Activated naive CD4-positive, alpha-beta T cell treated with anti-CD3 and anti-CD28 coated beads, Interleukin-2, amount 10 ng/mL, durations not matched to agents 7 days and 5 days (primary cell): ENCODE measurements at regions of chr2 and their contacts with region 1.

Region 1: DNA sequence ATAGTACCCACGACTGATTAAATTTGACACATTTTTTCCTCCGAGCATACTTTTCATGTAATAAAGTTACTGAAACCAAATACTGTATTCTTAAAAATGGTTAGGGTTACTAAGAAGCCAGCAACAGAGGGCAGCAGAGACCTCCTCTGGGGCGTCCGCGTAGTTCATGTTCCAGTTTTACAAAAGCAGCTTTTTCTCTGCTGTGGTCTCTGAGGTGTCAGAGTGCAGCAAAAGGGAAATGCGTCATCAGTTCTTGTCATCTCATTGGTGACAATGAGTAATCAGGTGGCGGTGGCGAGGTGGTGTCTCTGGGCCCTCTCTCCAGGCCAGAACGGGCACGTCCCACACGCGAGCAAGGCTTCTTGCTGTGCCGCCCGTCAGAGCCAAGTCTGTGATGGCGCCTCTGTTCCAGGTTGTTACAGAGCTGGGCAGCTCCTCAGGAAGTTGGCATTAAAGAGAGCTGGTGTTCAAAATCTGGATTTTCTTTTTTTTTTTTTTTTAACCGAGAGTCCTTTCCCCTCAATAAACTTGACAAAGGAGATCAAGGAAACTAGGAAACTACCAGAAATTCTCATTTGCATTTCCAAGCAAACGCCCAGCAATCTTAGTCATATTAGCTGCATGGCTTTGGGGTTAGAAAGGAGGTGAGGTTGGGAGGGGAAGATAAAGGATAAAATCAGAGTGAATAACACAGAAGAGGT is 98.6 kb upstream of the BZW1 start:
- DNase-seq: peak; percentile 96
- H3K4me3 Mint-ChIP-seq: peak overlapping the region; percentile 68
- H3K27ac Mint-ChIP-seq: peak overlapping the region; percentile 99
- H3K4me1 Mint-ChIP-seq: peaks cover 23% of the 10 kb centered on the region
- H3K27me3 Mint-ChIP-seq: peaks cover 7% of the 10 kb centered on the region

Region 2: DNA sequence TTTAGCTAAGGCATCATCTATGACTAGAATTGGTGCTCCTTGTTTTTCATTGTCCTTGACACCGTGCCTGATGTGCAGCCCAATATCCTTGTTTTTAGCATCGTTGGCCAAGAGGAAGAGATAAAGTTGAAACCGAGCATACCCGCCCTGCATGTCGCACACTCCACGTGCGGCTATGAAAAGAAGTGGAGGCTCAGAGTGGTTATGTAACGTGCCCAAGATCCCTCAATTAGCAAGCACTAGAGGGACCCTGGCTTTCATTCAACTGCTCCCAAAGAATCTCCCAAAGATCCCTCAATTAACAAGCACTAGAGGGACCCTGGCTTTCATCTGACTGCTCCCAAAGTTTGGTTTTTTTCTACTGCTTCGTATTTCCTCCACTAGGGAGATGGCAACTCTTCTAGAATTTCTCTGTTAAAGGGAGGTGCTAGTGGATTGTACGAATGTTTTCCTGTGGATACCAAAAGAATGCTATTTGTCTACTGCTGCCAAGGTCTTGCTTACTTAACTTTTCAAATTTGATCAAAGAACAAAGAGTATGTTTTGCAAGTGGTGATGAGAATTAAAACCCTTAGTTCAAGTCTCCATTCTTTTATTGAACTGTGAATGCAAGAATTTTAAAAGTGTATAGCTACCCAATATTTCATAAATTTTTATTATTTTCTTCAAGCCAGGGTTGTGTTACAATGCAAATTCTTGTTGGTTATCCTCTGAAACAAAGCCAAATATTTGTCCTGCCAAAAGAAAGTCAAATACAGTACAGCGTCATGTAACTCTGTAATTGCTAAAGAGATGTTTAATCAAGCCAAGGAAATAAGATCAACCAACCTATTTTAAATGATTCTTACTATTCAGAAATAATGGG is 35.2 kb before region 1 on chr2:
- CTCF ChIA-PET with region 1: no interaction called
- DNase-seq: no peak
- H3K4me3 Mint-ChIP-seq: no peak overlapping the region
- H3K27ac Mint-ChIP-seq: no peak overlapping the region
- H3K4me1 Mint-ChIP-seq: peaks cover 8% of the 10 kb centered on the region
- H3K27me3 Mint-ChIP-seq: peaks cover 21% of the 10 kb centered on the region

Region 3: GRCh38 chr2:200735061-200735460 is 21.9 kb after region 1 on chr2:
- CTCF ChIA-PET with region 1: interaction called, 23 read pairs
- DNase-seq: no peak
- H3K4me3 Mint-ChIP-seq: no peak overlapping the region
- H3K27ac Mint-ChIP-seq: no peak overlapping the region
- H3K4me1 Mint-ChIP-seq: peaks cover 11% of the 10 kb centered on the region
- H3K27me3 Mint-ChIP-seq: peaks cover 45% of the 10 kb centered on the region

Region 4: GRCh38 chr2:200765139-200765951 is 52.2 kb after region 1 on chr2:
- CTCF ChIA-PET with region 1: interaction called, 13 read pairs
- DNase-seq: no peak
- H3K4me3 Mint-ChIP-seq: no peak overlapping the region
- H3K27ac Mint-ChIP-seq: peak overlapping the region; percentile 46
- H3K4me1 Mint-ChIP-seq: peaks cover 14% of the 10 kb centered on the region
- H3K27me3 Mint-ChIP-seq: peaks cover 11% of the 10 kb centered on the region

Region 5: GRCh38 chr2:200811336-200812121 is 98.4 kb after region 1 on chr2 and contains the start of gene BZW1:
- CTCF ChIA-PET with region 1: interaction called, 11 read pairs
- DNase-seq: peak; percentile 98
- H3K4me3 Mint-ChIP-seq: peak within 1 kb of the TSS; percentile 88
- H3K27ac Mint-ChIP-seq: peak within 1 kb of the TSS; percentile 91
- H3K4me1 Mint-ChIP-seq: peaks cover 42% of the 10 kb centered on the region
- H3K27me3 Mint-ChIP-seq: peaks cover 5% of the 10 kb centered on the region

Region 6: GRCh38 chr2:200829258-200829655 is 116.1 kb after region 1 on chr2:
- CTCF ChIA-PET with region 1: no interaction called
- DNase-seq: no peak
- H3K4me3 Mint-ChIP-seq: no peak overlapping the region
- H3K27ac Mint-ChIP-seq: peak overlapping the region; percentile 33
- H3K4me1 Mint-ChIP-seq: no peaks in the 10 kb centered on the region
- H3K27me3 Mint-ChIP-seq: peaks cover 21% of the 10 kb centered on the region